ENCODE measurements at regions of chr12 and their contacts with region 1.

Region 1: DNA sequence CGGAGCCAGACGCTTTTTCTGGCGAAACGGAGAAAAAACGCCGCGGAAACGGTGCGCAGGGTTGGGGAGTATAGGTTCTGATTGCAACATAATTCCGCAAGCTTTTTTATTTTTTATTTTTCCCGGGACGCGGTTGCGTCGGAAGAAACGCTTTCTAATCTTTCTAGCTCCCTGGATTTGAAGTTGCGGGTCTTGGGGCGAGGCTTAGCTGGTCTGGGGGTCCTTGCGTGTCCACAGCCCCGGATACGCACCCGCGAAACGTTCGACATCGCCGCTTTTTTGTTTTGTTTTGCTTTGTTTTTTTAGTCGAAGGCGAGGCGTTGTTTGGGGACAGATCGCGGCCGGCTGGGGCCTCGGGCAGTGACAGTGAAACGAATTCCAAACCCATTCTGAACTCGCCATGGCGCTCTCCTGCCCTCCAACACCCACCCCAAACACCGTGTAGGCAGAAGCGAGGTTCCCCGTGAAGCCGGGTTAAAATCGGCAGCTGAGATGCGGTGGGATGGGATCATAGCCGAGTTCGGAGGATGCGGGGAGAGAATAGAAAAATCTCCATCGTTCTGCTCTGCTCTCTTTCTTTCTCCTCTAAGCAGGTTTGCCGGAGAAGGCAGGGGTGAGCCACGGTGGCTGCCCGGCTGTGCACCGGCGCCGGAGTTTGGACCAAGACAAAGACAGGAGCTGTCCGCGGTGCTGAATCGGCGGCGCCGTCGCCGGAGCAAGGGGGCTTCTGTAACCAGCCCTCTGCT is 8.1 kb upstream of the LHX5 start:
- DNase-seq: peak; percentile 48
- ATAC-seq: no peak
- H3K4me3 Mint-ChIP-seq: no peak overlapping the region
- H3K27ac Mint-ChIP-seq: no peak overlapping the region
- H3K4me1 Mint-ChIP-seq: peaks cover 5% of the 10 kb centered on the region
- H3K27me3 Mint-ChIP-seq: peaks cover 75% of the 10 kb centered on the region
- CTCF ChIP-seq: no peak

Region 2: DNA sequence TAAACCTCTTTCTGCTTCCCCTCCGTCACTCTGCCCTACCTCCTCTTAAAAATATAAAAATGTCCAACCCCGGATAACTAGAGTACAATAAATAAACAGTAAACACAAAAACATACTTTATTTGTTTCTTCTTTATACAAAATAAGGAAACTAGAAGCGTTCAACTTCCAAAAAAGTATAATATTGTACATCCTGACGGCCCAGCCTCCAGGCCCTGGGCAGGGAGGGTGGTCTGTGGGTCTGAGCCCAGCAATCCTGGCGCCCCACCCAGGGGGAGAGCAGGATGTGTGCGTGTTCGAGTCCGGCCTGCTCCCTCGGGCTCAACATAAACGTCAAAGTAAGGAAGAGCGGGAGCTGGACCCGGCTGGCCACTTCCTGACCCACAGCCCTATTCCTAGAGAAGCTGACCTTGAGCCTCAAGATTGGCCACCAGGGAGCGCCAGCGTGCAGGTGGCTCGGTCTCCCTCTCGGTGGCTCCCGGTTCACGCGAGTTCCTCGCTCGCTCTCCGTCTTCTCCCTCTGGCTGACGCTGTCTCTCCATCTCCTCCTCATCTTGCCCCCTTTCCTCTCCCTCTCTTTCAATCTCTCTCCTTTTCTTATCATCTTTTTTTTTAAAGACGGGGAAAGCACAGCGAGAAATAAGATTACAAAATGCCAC is 17.5 kb before region 1 on chr12:
- CTCF ChIA-PET with region 1: interaction called, 13 read pairs
- POLR2A ChIA-PET with region 1: no interaction called
- intact Hi-C with region 1: no loop called
- DNase-seq: peak; percentile 85
- ATAC-seq: peak; percentile 73
- H3K4me3 Mint-ChIP-seq: peak overlapping the region; percentile 51
- H3K27ac Mint-ChIP-seq: no peak overlapping the region
- H3K4me1 Mint-ChIP-seq: peaks cover 15% of the 10 kb centered on the region
- H3K27me3 Mint-ChIP-seq: peaks cover 53% of the 10 kb centered on the region
- CTCF ChIP-seq: peak; percentile 91

Region 3: DNA sequence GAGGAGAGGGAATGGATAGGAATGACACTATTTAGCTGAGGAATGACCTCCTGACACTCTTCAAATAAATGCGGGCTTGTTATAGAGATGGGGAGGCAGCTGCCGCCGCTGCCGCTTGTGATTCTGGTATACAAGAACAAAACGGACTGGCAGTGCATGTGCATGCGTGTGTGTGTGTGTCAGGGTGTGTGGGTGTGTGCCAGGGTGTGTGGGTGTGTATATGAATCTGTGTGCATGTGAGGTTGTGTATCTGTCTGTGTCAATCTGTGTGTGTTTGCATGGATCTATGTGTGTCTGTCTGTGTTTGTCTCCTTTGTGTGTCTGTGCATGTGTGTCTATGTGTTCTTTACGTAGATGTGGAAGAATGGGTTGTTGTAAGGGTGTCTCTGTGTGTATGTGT is 17.9 kb after region 1 on chr12:
- CTCF ChIA-PET with region 1: no interaction called
- POLR2A ChIA-PET with region 1: no interaction called
- intact Hi-C with region 1: no loop called
- DNase-seq: no peak
- ATAC-seq: no peak
- H3K4me3 Mint-ChIP-seq: no peak overlapping the region
- H3K27ac Mint-ChIP-seq: no peak overlapping the region
- H3K4me1 Mint-ChIP-seq: no peaks in the 10 kb centered on the region
- H3K27me3 Mint-ChIP-seq: peaks cover 28% of the 10 kb centered on the region
- CTCF ChIP-seq: no peak

Region 4: DNA sequence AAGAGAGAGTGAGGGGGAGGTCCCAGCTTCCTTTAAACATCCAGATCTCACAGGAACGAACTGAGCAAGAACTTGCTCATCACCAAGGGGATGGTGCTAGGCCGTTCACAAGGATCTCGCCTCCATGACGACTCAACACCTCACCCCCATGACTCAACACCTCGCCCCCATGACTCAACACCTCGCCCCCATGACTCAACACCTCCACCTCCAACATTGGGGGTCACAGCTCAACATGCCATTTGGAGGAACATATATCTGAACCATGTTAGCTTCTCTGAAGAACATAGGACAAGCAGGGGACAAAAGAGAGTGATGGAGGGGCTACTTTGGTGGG is 58.0 kb after region 1 on chr12:
- CTCF ChIA-PET with region 1: no interaction called
- POLR2A ChIA-PET with region 1: no interaction called
- intact Hi-C with region 1: no loop called
- DNase-seq: peak; percentile 13
- ATAC-seq: no peak
- H3K4me3 Mint-ChIP-seq: no peak overlapping the region
- H3K27ac Mint-ChIP-seq: no peak overlapping the region
- H3K4me1 Mint-ChIP-seq: no peaks in the 10 kb centered on the region
- H3K27me3 Mint-ChIP-seq: peaks cover 5% of the 10 kb centered on the region
- CTCF ChIP-seq: no peak

Region 5: DNA sequence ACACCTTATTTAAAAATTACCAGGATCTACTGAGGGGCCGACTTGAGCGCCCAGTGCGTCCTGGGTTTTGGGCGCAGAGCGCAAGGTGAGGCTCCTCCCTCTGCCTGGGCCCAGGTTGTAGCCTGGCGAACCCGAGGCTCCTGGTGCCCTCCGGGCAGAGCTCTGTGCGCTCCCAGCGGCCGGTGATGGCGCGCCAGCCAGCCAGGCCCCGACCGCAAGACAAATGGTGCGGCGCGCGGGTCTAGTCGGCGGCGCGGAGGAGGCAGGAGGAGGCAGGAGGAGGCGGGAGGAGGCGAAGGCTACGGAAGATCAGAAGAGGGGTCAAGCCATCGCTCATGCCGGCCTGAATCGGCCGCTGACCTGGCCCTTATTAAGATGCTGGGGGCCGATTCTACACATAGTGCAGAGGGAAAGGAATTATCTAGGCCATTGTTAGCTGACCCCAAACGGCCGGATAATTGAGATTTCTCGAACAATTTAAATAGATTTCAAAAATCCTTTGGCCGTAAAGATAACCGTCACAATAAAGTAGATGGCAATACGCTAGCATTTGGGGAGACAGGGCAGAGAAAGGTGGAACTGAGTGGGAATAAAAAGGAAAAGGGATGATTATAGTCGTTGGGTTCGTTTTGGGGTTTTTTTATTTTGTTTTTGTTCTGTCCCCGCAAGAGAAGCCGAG is 923.4 kb after region 1 on chr12:
- CTCF ChIA-PET with region 1: no interaction called
- POLR2A ChIA-PET with region 1: no interaction called
- intact Hi-C with region 1: loop called (anchors 5 kb)
- DNase-seq: no peak
- ATAC-seq: no peak
- H3K4me3 Mint-ChIP-seq: no peak overlapping the region
- H3K27ac Mint-ChIP-seq: no peak overlapping the region
- H3K4me1 Mint-ChIP-seq: peaks cover 3% of the 10 kb centered on the region
- H3K27me3 Mint-ChIP-seq: peaks cover 89% of the 10 kb centered on the region
- CTCF ChIP-seq: no peak

Region 6: GRCh38 chr12:114447274-114447716 is 967.5 kb after region 1 on chr12:
- CTCF ChIA-PET with region 1: no interaction called
- POLR2A ChIA-PET with region 1: no interaction called
- intact Hi-C with region 1: loop called (anchors 5 kb)
- DNase-seq: no peak
- ATAC-seq: no peak
- H3K4me3 Mint-ChIP-seq: no peak overlapping the region
- H3K27ac Mint-ChIP-seq: no peak overlapping the region
- H3K4me1 Mint-ChIP-seq: no peaks in the 10 kb centered on the region
- H3K27me3 Mint-ChIP-seq: peaks cover 79% of the 10 kb centered on the region
- CTCF ChIP-seq: no peak

Region 7: DNA sequence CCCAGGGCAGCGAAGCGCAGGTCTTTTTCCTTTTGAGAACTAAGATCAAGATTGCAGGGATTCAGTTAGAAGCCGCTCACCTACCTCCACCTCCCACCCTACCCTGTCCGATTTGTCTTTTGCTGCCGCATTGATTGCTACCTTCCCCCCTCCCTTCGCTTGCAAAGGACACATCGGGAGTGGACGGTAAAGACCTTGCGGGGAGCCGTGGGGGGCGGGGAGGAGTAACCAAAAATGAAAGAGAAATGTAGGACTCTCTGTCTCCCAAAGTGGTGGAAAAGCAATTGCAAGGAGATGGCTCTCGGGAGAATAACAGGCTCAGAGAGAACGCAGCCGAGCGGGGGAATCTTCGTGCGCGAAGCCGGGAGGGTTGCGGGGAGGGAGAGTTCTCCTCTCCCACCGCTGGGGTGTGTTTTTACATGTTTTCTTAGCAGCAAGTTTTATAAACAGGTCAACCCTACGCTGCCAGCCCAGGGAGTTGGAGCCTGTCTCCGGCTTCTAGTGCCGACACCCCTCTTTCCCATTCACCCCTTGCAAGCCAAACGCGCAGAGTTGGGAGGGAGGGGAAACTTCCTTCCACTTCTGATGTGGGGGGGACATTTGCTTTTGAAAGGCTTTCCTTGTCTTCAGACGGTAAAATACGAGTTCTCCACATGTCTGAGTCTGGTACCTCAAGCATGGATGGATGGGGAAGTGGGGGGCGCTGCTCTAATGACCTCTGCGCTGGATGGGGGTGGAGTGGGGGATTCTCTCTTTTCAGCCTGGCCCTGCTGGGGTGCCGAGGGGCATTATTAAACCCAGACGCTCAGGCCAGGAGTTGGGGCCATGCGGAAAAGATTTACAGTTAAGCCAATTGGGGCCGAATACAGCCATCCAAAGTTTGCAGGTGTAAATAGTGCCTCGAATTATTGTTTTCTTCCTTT is 1213.1 kb after region 1 on chr12:
- CTCF ChIA-PET with region 1: no interaction called
- POLR2A ChIA-PET with region 1: no interaction called
- intact Hi-C with region 1: loop called (anchors 10 kb)
- DNase-seq: no peak
- ATAC-seq: no peak
- H3K4me3 Mint-ChIP-seq: no peak overlapping the region
- H3K27ac Mint-ChIP-seq: no peak overlapping the region
- H3K4me1 Mint-ChIP-seq: no peaks in the 10 kb centered on the region
- H3K27me3 Mint-ChIP-seq: peaks cover 92% of the 10 kb centered on the region
- CTCF ChIP-seq: no peak